ENCODE measurements at regions of chr3 and their contacts with region 1.

Region 1: DNA sequence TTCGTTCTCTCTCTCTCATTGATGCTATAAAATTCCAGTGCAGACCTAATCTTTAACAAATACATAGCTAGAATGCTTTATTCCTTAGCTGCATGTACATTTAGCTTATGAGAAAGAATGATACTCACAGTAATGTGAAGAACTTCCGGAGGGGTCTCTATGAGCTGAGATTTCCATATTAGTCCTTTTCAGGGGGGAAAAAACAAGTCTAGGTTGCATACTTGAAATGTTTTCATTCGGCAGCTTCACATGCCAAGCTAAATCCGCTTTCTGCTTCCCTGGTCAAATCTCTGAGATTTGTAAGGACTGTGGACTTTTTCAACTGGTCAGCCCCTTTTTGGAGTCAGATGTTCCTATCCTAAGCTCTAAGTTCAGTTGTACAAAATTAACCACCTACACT is 111.5 kb upstream of the COL8A1 start:
- DNase-seq: no peak
- H3K4me3 ChIP-seq: no peak overlapping the region
- H3K27ac ChIP-seq: no peak overlapping the region
- H3K4me1 ChIP-seq: peaks cover 16% of the 10 kb centered on the region
- H3K27me3 ChIP-seq: no peaks in the 10 kb centered on the region
- CTCF ChIP-seq: no peak

Region 2: DNA sequence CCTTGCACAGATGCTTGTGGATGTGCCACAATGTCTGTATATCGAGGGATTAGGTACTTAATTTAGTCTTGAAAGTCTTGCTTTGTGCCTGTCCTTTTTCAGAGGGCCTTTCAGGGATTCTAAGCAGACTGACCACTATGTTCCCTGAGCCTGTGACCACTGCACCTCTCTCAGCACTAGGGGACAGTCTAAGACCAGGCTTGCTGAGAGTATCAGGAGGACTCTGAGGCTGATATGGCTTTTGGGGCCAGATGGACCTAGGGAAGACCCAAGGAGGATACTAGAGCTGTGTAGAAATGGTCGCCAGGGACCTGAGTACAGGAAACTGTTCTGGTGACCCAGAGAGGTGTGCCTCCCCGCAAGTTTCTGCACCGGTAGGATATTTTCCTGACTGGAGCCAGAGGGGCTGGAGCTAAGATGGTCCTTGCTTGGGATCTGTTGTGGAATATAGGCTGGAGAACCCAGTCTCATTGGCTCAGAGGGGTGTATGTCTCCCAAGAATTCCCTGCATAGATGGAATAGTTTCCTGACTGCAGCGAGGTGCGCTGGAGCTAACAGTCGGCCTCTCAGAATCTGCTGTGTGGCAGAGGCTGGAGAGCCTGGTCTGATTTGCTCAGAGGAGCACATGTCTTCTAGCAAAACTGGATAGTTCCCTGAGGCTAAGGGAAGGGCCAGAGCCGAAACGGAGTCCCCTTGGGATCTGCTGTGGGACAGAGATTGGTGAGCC is 412.2 kb before region 1 on chr3:
- CTCF ChIA-PET with region 1: no interaction called
- POLR2A ChIA-PET with region 1: no interaction called
- intact Hi-C with region 1: loop called (anchors 10 kb)
- DNase-seq: peak; percentile 60
- H3K4me3 ChIP-seq: no peak overlapping the region
- H3K27ac ChIP-seq: no peak overlapping the region
- H3K4me1 ChIP-seq: no peaks in the 10 kb centered on the region
- H3K27me3 ChIP-seq: no peaks in the 10 kb centered on the region
- CTCF ChIP-seq: peak; percentile 63